Activated B cell treated with CpG ODN at 0.5 μM for 24 hours (primary cell): ENCODE measurements at regions of chr10 and their contacts with region 1.

Region 1: DNA sequence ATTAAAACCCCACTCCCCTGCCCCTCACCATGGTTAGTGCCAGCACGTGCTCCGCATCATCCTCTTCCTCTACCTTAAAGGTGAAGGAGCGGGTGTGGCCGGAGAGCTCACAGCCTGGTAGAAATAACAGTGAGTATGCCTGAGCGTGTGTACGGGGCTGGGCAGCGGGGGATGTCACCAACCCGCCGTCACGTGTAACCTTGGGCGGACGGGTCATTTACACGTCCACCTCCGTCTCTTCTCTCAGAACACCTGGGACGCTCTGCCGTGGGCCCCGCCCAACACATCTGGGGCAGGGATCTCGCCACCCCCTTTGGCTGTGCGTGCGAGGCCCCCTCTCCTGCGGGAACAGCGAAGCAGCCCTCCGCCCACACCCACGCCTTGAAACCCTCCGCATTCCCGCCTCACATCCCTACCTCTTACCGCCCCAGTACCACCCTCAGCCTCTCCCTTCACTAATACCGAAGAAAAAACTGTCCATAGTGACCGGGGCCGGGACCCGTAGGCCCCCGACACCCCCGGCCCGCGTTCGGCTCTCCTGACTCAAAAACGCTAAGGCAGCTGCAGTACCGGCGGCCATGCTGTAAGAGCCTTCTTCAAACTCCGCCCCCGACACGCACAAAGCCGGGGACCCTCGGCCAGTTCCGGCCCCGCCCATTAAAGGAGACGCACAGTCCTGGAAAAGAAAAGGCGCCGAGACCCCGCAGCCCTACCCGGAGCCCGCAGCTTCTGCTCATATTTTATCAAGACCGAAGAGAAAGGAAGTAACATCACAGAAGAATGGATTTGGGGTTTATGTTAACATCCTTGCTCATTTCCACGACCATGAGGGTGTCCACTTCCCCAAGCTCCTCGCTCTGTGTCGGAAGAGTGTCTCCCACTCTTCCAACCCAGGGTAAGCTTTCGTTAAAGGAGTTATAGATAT is at the start of gene NPM3:
- DNase-seq: peak; percentile 66
- ATAC-seq: peak; percentile 75
- H3K4me3 Mint-ChIP-seq: peak within 1 kb of the TSS; percentile 100
- H3K27ac Mint-ChIP-seq: peak within 1 kb of the TSS; percentile 90
- H3K4me1 Mint-ChIP-seq: peaks cover 53% of the 10 kb centered on the region
- H3K27me3 Mint-ChIP-seq: peaks cover 6% of the 10 kb centered on the region
- CTCF ChIP-seq: no peak
- total RNA-seq, gene NPM3: 48.1 and 60.7 TPM in 2 replicates

Region 2: GRCh38 chr10:101161494-101162299 is 621.4 kb before region 1 on chr10:
- CTCF ChIA-PET with region 1: no interaction called
- POLR2A ChIA-PET with region 1: no interaction called
- intact Hi-C with region 1: loop called (anchors 1 kb)
- DNase-seq: peak; percentile 47
- ATAC-seq: peak; percentile 94
- H3K4me3 Mint-ChIP-seq: no peak overlapping the region
- H3K27ac Mint-ChIP-seq: no peak overlapping the region
- H3K4me1 Mint-ChIP-seq: peaks cover 15% of the 10 kb centered on the region
- H3K27me3 Mint-ChIP-seq: peaks cover 59% of the 10 kb centered on the region
- CTCF ChIP-seq: peak; percentile 32

Region 3: DNA sequence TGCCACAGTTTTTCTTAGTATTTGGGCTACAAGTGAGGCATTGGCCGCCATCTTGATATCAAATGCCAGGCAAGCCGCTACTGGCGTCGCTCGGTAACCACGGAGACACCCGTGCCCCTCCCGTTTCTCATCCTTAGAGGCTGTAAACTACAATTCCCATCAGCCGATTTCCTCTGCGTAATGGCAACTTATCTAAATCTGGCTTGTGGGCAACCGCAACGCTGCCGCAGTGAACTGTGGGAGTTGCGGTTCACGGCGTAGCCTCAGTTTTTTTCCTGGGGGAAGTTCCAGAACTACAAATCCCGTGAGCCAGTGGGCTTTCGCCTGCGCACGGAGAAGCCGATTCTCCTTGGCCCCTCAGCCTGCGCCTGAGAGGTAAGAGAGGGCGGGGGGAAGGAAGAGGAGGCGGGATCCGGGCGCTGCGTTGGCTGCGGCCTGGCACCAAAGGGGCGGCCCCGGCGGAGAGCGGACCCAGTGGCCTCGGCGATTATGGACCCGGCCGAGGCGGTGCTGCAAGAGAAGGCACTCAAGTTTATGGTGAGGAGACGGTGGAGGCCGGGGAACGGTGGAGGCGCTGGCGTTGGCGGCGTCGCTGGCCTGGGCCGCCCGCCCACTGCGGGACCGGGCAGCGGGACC is 429.3 kb before region 1 on chr10 and contains the start of gene BTRC:
- CTCF ChIA-PET with region 1: no interaction called
- POLR2A ChIA-PET with region 1: no interaction called
- intact Hi-C with region 1: loop called (anchors 5 kb)
- DNase-seq: peak; percentile 89
- ATAC-seq: peak; percentile 96
- H3K4me3 Mint-ChIP-seq: peak within 1 kb of the TSS; percentile 99
- H3K27ac Mint-ChIP-seq: peak within 1 kb of the TSS; percentile 90
- H3K4me1 Mint-ChIP-seq: peaks cover 24% of the 10 kb centered on the region
- H3K27me3 Mint-ChIP-seq: peaks cover 18% of the 10 kb centered on the region
- CTCF ChIP-seq: no peak
- total RNA-seq, gene BTRC: 11.8 and 19.4 TPM in 2 replicates

Region 4: GRCh38 chr10:101587725-101588653 is 195.1 kb before region 1 on chr10 and contains the starts of genes DPCD and POLL:
- CTCF ChIA-PET with region 1: no interaction called
- POLR2A ChIA-PET with region 1: no interaction called
- intact Hi-C with region 1: loop called (anchors 5 kb)
- DNase-seq: peak; percentile 83
- ATAC-seq: peak; percentile 97
- H3K4me3 Mint-ChIP-seq: peak within 1 kb of the TSS; percentile 92
- H3K27ac Mint-ChIP-seq: peak within 1 kb of the TSS; percentile 80
- H3K4me1 Mint-ChIP-seq: peaks cover 19% of the 10 kb centered on the region
- H3K27me3 Mint-ChIP-seq: no peaks in the 10 kb centered on the region
- CTCF ChIP-seq: no peak
- total RNA-seq, gene DPCD: 2.3 and 2.9 TPM in 2 replicates
- total RNA-seq, gene POLL: 35.0 and 39.5 TPM in 2 replicates

Region 5: GRCh38 chr10:101693978-101694673 is 88.9 kb before region 1 on chr10:
- CTCF ChIA-PET with region 1: interaction called, 3 read pairs
- POLR2A ChIA-PET with region 1: no interaction called
- intact Hi-C with region 1: loop called (anchors 1 kb)
- DNase-seq: peak; percentile 76
- ATAC-seq: peak; percentile 68
- H3K4me3 Mint-ChIP-seq: peak overlapping the region; percentile 97
- H3K27ac Mint-ChIP-seq: peak overlapping the region; percentile 98
- H3K4me1 Mint-ChIP-seq: peaks cover 49% of the 10 kb centered on the region
- H3K27me3 Mint-ChIP-seq: no peaks in the 10 kb centered on the region
- CTCF ChIP-seq: no peak

Region 6: DNA sequence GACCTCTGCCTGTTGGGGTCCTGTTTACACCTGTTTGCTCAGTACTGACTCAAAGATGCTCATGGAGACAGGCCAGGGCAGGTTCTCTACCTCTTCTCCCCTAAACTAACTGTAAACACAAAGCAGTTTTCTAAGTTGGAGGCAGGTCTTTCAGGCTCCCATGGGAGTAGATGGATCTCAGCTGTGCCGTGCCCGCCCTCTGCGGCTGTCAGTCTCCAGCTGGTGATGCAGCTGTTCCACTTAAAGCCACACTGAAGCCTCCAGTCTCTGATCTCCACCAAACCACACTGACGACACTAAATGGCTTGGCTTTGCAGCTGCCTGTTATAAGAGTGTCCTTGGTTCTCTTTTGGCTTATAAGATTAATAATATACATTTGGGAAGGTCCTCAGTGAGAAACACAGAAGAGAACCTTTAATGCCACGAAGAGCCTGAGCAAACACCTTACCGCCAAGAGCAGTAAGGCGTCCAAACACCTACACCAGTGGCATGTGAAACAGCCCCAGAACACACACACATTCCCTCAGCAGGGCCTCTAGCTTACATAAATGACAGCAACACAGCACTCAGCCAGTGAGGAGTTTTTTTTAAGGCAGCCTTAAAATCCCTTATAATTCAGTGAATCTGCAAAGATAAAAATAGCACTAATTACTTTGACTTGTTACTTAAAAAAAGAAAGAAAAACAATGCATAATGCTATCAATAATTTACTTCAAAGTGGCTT is 120.9 kb after region 1 on chr10:
- CTCF ChIA-PET with region 1: no interaction called
- POLR2A ChIA-PET with region 1: no interaction called
- intact Hi-C with region 1: no loop called
- DNase-seq: peak; percentile 53
- ATAC-seq: peak; percentile 79
- H3K4me3 Mint-ChIP-seq: peak overlapping the region; percentile 57
- H3K27ac Mint-ChIP-seq: peak overlapping the region; percentile 95
- H3K4me1 Mint-ChIP-seq: peaks cover 85% of the 10 kb centered on the region
- H3K27me3 Mint-ChIP-seq: no peaks in the 10 kb centered on the region
- CTCF ChIP-seq: no peak

Region 7: GRCh38 chr10:102064868-102065560 is 281.9 kb after region 1 on chr10 and contains the start of gene HPS6:
- CTCF ChIA-PET with region 1: no interaction called
- POLR2A ChIA-PET with region 1: interaction called, 3 read pairs
- intact Hi-C with region 1: loop called (anchors 1 kb)
- DNase-seq: peak; percentile 88
- ATAC-seq: peak; percentile 97
- H3K4me3 Mint-ChIP-seq: peak within 1 kb of the TSS; percentile 89
- H3K27ac Mint-ChIP-seq: peak within 1 kb of the TSS; percentile 90
- H3K4me1 Mint-ChIP-seq: peaks cover 24% of the 10 kb centered on the region
- H3K27me3 Mint-ChIP-seq: no peaks in the 10 kb centered on the region
- CTCF ChIP-seq: no peak
- total RNA-seq, gene HPS6: 22.8 and 23.0 TPM in 2 replicates

Region 8: GRCh38 chr10:102114861-102115618 is 332.0 kb after region 1 on chr10:
- CTCF ChIA-PET with region 1: no interaction called
- POLR2A ChIA-PET with region 1: no interaction called
- intact Hi-C with region 1: loop called (anchors 5 kb)
- DNase-seq: peak; percentile 70
- ATAC-seq: peak; percentile 78
- H3K4me3 Mint-ChIP-seq: peak overlapping the region; percentile 91
- H3K27ac Mint-ChIP-seq: peak overlapping the region; percentile 94
- H3K4me1 Mint-ChIP-seq: peaks cover 62% of the 10 kb centered on the region
- H3K27me3 Mint-ChIP-seq: no peaks in the 10 kb centered on the region
- CTCF ChIP-seq: no peak

Region 9: GRCh38 chr10:103086799-103087198 is 1303.7 kb after region 1 on chr10:
- CTCF ChIA-PET with region 1: no interaction called
- POLR2A ChIA-PET with region 1: no interaction called
- intact Hi-C with region 1: no loop called
- DNase-seq: no peak
- ATAC-seq: no peak
- H3K4me3 Mint-ChIP-seq: no peak overlapping the region
- H3K27ac Mint-ChIP-seq: no peak overlapping the region
- H3K4me1 Mint-ChIP-seq: no peaks in the 10 kb centered on the region
- H3K27me3 Mint-ChIP-seq: no peaks in the 10 kb centered on the region
- CTCF ChIP-seq: no peak